Right ventricle myocardium superior (tissue), 1 donor: ENCODE measurements at regions of chr22 and their contacts with region 1.

Region 1: GRCh38 chr22:49046546-49047361 is 780.9 kb downstream of the BRD1 start:
- DNase-seq: no peak
- ATAC-seq: peak; percentile 69

Region 2: DNA sequence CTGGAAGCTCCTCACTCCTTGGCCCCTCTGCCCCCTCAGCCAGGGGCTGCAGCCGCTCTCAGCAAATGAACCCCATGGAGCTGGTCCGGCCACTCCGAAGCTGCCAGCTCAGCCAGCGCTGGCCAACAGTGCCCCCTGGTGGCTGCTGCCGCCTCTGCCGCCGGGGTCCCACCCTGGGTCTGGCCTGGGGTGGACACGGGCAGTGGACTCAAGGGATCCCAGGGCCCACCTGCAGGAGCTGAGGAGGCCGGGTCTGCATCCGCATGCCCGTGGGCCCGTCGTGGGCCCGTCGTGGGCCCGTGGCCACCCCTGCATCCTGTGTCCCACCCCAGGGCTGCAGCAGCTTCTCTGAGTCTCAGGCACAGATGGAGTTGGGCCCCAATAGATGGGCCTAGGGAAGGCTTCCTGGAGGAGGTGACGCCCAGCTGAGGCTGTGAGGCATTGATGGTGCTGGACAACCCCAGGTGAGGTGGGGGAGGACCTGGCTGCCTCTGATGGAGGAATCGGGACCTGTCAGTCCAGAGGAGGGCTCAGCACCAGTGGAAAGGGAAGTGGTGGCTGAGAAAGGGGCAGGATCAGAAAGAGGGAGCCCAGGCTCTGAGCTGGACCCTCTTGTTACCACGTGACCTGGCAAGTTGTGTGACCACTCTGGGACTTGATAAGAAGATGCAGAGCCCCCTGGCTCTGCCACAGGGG is 258.6 kb after region 1 on chr22:
- intact Hi-C with region 1: loop called (anchors 5 kb)
- DNase-seq: peak; percentile 69
- ATAC-seq: peak; percentile 88